Esophagus squamous epithelium (tissue), 5 donors: ENCODE measurements at regions of chr14 and their contacts with region 1.

Region 1: GRCh38 chr14:68979021-68979782 is at the start of gene ACTN1:
- DNase-seq: peak; percentile 35
- H3K4me3 ChIP-seq: peak within 1 kb of the TSS; percentile 73 to 93 (median 80)
- H3K27ac ChIP-seq: peak within 1 kb of the TSS; percentile 90 to 97 (median 97)
- H3K4me1 ChIP-seq: peaks cover 27 to 70% (median 37%) of the 10 kb centered on the region in 3 donors
- H3K27me3 ChIP-seq: no peaks in the 10 kb centered on the region
- CTCF ChIP-seq: no peak
- POLR2A ChIP-seq: peak in 2 of 4 donors; percentile 86 to 93
- total RNA-seq, gene ACTN1: 118 to 145 (median 131) TPM

Region 2: DNA sequence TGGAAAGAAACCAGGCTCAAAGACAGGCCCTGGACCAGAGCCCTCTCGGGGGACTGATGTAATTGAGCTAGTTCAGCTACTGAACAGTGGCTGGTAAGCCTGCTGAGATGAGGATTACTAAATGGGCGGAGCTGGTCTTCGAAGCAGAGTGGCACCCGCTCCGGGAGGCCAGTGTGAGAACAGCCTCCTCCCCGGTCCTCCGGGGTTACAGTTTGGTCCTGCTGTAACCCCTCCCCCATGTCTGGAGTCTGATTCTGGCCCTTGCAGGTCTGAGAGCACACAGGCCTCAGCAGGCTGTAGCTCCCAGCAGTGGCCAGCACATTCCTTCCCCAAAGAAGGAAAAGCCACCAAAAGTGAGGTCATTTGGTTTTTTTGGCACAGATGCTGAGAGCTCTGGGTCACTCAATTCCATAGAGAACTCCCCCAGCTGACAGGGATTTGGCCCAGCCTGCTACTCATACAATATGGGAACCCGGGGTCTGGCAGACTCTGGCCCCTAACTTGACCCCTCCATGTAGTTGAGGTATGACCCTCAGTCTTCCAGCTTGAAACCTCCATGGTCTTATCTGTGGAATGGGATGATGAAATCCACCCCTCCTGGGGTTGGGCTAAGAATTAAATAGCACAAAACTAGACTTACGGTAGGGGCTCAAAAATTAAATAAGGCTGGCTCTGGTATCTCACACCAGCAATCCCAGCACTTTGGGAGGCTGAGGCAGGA is 39.1 kb before region 1 on chr14:
- intact Hi-C with region 1: loop called (anchors 5 kb)
- DNase-seq: no peak
- H3K4me3 ChIP-seq: no peak overlapping the region
- H3K27ac ChIP-seq: peak overlapping the region; percentile 75 to 93 (median 90)
- H3K4me1 ChIP-seq: peaks cover 81 to 100% (median 95%) of the 10 kb centered on the region in 3 donors
- H3K27me3 ChIP-seq: no peaks in the 10 kb centered on the region
- CTCF ChIP-seq: no peak
- POLR2A ChIP-seq: no peak

Region 3: DNA sequence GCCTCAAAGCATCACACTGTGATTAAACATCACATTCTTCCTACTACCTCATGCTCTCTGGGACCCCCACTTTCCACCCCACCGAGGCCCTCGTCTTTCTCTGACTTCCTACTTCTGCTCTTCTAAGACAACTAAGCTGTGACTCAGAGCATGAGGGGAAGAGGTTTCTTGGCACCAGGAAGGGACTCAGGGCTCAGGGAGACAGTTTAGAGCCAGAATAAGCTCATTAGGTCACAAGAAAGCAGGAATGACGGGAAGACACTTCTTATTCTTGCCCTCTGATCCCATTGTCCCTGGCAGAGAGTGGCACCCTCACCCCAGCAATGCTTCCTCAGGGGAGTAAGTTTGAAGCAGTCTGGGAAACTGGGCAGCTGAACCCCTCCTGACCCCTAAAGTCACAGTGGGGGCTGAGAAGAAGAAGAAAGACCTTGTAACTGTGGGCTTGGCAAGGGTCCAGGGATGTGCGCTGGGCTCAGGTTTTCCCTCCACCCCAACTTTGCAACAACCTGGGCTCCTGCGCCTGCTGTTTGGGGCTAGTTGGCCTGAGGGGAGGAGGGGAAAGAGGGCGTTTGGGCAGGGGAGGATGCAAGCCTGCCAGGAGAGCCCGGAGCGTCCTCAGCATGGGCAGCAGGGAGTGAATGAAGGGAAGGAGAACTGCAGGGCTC is 64.5 kb after region 1 on chr14:
- intact Hi-C with region 1: loop called (anchors 10 kb)
- DNase-seq: no peak
- H3K4me3 ChIP-seq: no peak overlapping the region
- H3K27ac ChIP-seq: peak overlapping the region; percentile 46 to 84 (median 81)
- H3K4me1 ChIP-seq: peaks cover 33 to 65% (median 40%) of the 10 kb centered on the region in 3 donors
- H3K27me3 ChIP-seq: no peaks in the 10 kb centered on the region
- CTCF ChIP-seq: no peak
- POLR2A ChIP-seq: no peak